CD8-positive, alpha-beta T cell (primary cell): ENCODE measurements at regions of chr7 and their contacts with region 1.

Region 1: GRCh38 chr7:140003913-140004382 is 58.8 kb downstream of the PARP12 start:
- DNase-seq: peak in 4 of 9 experiments; percentile 4 to 50 (median 31)
- ATAC-seq: no peak
- H3K4me3 ChIP-seq: no peak overlapping the region
- H3K4me3 Mint-ChIP-seq: no peak overlapping the region
- H3K27ac ChIP-seq: no peak overlapping the region
- H3K27ac Mint-ChIP-seq: no peak overlapping the region
- H3K4me1 ChIP-seq: no peaks in the 10 kb centered on the region
- H3K4me1 Mint-ChIP-seq: no peaks in the 10 kb centered on the region
- H3K27me3 ChIP-seq: no peaks in the 10 kb centered on the region
- H3K27me3 Mint-ChIP-seq: no peaks in the 10 kb centered on the region
- CTCF ChIP-seq: peak; percentile 49

Region 2: GRCh38 chr7:139500770-139501138 is 503.2 kb before region 1 on chr7:
- CTCF ChIA-PET with region 1: interaction called, 5 read pairs
- POLR2A ChIA-PET with region 1: no interaction called
- intact Hi-C with region 1: loop called in 1 of 2 experiments (anchors 2 kb)
- DNase-seq: no peak
- ATAC-seq: no peak
- H3K4me3 ChIP-seq: peak overlapping the region in 1 of 2 experiments; percentile 45
- H3K4me3 Mint-ChIP-seq: no peak overlapping the region
- H3K27ac ChIP-seq: no peak overlapping the region
- H3K27ac Mint-ChIP-seq: no peak overlapping the region
- H3K4me1 ChIP-seq: peaks cover 5% of the 10 kb centered on the region
- H3K4me1 Mint-ChIP-seq: peaks cover 4% of the 10 kb centered on the region
- H3K27me3 ChIP-seq: no peaks in the 10 kb centered on the region
- H3K27me3 Mint-ChIP-seq: peaks cover 4% of the 10 kb centered on the region
- CTCF ChIP-seq: no peak

Region 3: DNA sequence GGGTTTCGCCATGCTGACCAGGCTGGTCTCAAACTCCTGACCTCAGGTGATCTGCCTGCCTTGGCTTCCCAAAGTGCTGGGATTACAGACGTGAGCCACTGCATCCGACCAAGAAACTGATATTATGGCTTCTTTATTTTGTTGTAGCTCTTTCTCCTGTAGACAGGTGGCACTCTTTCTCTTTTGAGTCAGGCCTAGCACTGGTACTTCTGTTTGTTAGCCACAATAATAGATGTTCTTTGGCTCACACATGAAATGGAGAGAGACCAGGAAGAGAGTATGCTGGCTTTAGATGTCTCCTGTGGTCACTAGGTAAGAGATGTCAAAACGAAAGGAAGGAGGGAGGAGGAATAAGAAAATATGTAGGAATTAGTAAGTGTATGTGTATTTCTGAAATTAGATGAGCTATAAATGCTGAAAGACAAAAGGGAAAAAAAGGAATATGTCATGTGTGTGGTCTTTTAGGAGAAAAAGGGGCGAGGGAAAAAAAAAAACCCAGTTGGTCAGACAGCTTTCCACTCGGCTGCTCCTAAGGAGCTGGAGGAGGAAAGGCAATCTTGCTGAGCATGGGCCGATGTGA is 401.7 kb before region 1 on chr7:
- CTCF ChIA-PET with region 1: interaction called, 16 read pairs
- POLR2A ChIA-PET with region 1: no interaction called
- intact Hi-C with region 1: loop called in 1 of 2 experiments (anchors 1 kb)
- DNase-seq: peak in 2 of 9 experiments; percentile 33 to 49
- ATAC-seq: peak; percentile 61
- H3K4me3 ChIP-seq: no peak overlapping the region
- H3K4me3 Mint-ChIP-seq: no peak overlapping the region
- H3K27ac ChIP-seq: no peak overlapping the region
- H3K27ac Mint-ChIP-seq: no peak overlapping the region
- H3K4me1 ChIP-seq: no peaks in the 10 kb centered on the region
- H3K4me1 Mint-ChIP-seq: no peaks in the 10 kb centered on the region
- H3K27me3 ChIP-seq: no peaks in the 10 kb centered on the region
- H3K27me3 Mint-ChIP-seq: no peaks in the 10 kb centered on the region
- CTCF ChIP-seq: peak; percentile 57

Region 4: DNA sequence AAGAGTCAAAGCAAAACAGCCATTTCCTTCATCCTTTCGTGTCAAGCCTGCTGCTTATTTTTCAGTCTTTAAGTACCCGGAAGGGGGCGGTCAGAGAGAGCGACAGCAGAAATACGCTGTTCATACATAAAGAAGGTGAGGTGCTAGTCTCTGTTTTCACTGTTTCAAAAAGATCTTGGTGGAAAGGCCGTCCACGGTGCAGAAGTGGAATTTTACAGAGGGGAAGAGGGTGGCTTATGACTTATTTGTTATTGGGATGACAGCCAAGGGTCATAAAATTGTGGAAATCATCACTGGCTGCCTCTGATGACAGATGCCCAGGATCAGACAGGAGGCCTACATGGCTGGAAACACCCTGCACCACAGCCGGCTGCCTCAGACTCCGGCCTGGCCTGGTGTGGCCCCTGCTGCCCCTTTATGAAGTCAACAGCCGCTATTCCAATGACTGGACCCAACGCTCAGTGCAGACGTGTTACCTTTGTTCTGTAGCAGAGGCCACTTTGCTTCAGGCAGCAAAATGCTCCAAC is 283.2 kb before region 1 on chr7:
- CTCF ChIA-PET with region 1: no interaction called
- POLR2A ChIA-PET with region 1: no interaction called
- intact Hi-C with region 1: loop called (anchors 5 kb)
- DNase-seq: peak in 2 of 9 experiments; percentile 18 to 34
- ATAC-seq: no peak
- H3K4me3 ChIP-seq: no peak overlapping the region
- H3K4me3 Mint-ChIP-seq: no peak overlapping the region
- H3K27ac ChIP-seq: no peak overlapping the region
- H3K27ac Mint-ChIP-seq: no peak overlapping the region
- H3K4me1 ChIP-seq: peaks cover 15% of the 10 kb centered on the region
- H3K4me1 Mint-ChIP-seq: peaks cover 14% of the 10 kb centered on the region
- H3K27me3 ChIP-seq: no peaks in the 10 kb centered on the region
- H3K27me3 Mint-ChIP-seq: no peaks in the 10 kb centered on the region
- CTCF ChIP-seq: no peak

Region 5: DNA sequence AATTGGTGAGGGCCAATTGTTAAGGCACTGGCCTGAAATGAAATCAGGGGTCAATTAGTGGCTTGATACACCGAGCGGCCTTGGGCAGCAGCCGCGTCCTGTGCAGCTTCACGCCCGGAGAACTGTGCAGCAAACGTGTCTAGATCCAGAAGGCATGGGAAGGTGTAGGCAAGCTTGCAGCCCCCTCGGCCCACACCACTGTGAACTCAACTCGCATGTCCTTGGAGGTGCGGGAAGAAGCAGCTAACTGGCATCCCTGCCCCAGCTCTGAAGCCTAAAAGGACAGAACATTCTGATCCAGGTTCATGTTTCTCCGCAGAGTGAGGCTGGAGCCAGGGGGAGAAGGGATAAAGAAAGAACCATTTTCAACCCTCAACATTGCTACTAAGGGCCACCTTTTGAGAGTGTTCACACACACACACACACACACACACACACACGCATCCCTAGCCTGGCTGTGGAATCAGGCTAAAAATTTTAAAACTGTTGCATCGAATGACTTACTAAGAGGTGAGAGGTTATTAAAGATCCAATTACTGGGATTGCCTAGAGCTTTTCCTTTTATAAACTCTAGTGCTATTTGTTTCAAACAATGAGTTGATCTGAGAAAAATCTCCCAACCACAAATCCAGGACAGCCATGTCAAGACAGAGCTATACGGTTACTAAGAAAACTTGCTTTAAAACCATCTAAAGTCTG is 45.2 kb before region 1 on chr7:
- CTCF ChIA-PET with region 1: no interaction called
- POLR2A ChIA-PET with region 1: no interaction called
- intact Hi-C with region 1: no loop called
- DNase-seq: no peak
- ATAC-seq: no peak
- H3K4me3 ChIP-seq: no peak overlapping the region
- H3K4me3 Mint-ChIP-seq: no peak overlapping the region
- H3K27ac ChIP-seq: no peak overlapping the region
- H3K27ac Mint-ChIP-seq: no peak overlapping the region
- H3K4me1 ChIP-seq: no peaks in the 10 kb centered on the region
- H3K4me1 Mint-ChIP-seq: no peaks in the 10 kb centered on the region
- H3K27me3 ChIP-seq: no peaks in the 10 kb centered on the region
- H3K27me3 Mint-ChIP-seq: no peaks in the 10 kb centered on the region
- CTCF ChIP-seq: no peak

Region 6: DNA sequence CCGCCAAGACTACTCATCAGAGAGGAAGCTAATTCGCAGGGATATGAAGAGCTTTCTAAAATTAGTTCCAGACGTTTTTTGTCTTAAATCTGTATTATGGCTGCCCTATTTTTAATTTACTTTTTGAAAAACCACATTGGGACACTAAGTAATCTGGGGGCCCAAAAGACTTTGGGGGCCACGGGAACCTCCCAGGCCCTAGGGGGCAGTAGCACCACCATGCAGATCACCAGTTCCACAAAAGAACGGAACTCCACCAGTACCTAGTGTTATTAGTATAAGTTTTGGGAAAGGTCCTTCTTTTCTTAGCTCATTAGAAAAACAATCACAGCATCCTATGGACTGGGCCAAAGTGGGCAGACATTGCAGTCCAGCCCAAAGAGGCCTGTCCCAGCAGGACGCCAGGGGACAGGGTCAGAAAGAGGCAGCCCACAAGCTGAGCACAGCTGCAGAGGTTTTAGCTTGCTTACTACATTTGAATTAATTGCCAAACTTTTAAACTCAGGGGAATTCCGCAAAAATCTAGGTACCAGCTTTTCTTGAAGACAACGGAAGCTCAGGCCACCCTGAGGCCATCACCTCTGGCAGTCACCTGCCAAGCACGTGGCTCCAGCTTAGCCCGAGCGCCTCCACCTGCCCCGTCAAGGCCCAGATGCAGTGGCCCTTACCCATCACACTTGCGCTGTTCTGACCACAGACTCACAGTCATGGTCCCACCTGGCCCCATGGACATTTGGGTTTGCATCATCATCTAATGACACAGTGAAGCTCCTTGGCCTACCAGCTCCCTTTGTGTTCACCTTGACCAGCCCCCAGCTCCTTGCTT is 16.0 kb before region 1 on chr7:
- CTCF ChIA-PET with region 1: interaction called, 11 read pairs
- POLR2A ChIA-PET with region 1: no interaction called
- intact Hi-C with region 1: no loop called
- DNase-seq: no peak
- ATAC-seq: no peak
- H3K4me3 ChIP-seq: no peak overlapping the region
- H3K4me3 Mint-ChIP-seq: no peak overlapping the region
- H3K27ac ChIP-seq: no peak overlapping the region
- H3K27ac Mint-ChIP-seq: no peak overlapping the region
- H3K4me1 ChIP-seq: no peaks in the 10 kb centered on the region
- H3K4me1 Mint-ChIP-seq: no peaks in the 10 kb centered on the region
- H3K27me3 ChIP-seq: no peaks in the 10 kb centered on the region
- H3K27me3 Mint-ChIP-seq: no peaks in the 10 kb centered on the region
- CTCF ChIP-seq: no peak

Region 7: DNA sequence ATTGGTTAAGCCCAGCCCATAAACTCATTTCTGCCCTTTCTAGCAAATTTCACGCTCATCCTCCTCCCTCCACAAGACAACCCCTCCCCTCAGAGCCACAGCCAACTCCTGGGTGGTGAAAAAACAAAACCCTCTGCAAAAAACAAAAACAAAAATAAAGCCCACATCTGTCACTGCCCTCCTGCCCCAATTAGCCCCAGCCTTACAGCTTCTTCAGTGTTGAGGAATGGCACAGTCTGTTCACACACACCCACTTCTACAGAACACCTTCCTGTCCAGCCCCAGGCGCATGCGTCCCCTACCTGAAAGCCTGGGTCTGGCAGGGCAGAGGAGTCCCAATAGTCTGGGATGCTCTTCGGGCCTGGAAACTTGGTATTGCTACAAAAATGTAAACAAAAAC is 24.4 kb after region 1 on chr7:
- CTCF ChIA-PET with region 1: no interaction called
- POLR2A ChIA-PET with region 1: no interaction called
- intact Hi-C with region 1: no loop called
- DNase-seq: no peak
- ATAC-seq: no peak
- H3K4me3 ChIP-seq: no peak overlapping the region
- H3K4me3 Mint-ChIP-seq: no peak overlapping the region
- H3K27ac ChIP-seq: no peak overlapping the region
- H3K27ac Mint-ChIP-seq: no peak overlapping the region
- H3K4me1 ChIP-seq: no peaks in the 10 kb centered on the region
- H3K4me1 Mint-ChIP-seq: peaks cover 5% of the 10 kb centered on the region
- H3K27me3 ChIP-seq: no peaks in the 10 kb centered on the region
- H3K27me3 Mint-ChIP-seq: no peaks in the 10 kb centered on the region
- CTCF ChIP-seq: no peak

Region 8: GRCh38 chr7:140053812-140054539 is 50.0 kb after region 1 on chr7:
- CTCF ChIA-PET with region 1: no interaction called
- POLR2A ChIA-PET with region 1: no interaction called
- intact Hi-C with region 1: no loop called
- DNase-seq: peak in 2 of 9 experiments; percentile 8 to 38
- ATAC-seq: no peak
- H3K4me3 ChIP-seq: no peak overlapping the region
- H3K4me3 Mint-ChIP-seq: no peak overlapping the region
- H3K27ac ChIP-seq: peak overlapping the region in 1 of 2 experiments; percentile 14
- H3K27ac Mint-ChIP-seq: peak overlapping the region; percentile 53
- H3K4me1 ChIP-seq: no peaks in the 10 kb centered on the region
- H3K4me1 Mint-ChIP-seq: peaks cover 55% of the 10 kb centered on the region
- H3K27me3 ChIP-seq: no peaks in the 10 kb centered on the region
- H3K27me3 Mint-ChIP-seq: no peaks in the 10 kb centered on the region
- CTCF ChIP-seq: no peak